CD8-positive, alpha-beta T cell (primary cell): ENCODE measurements at regions of chr11 and their contacts with region 1.

Region 1: GRCh38 chr11:70191495-70192140 is 11.5 kb upstream of the FADD start:
- DNase-seq: peak in 7 of 9 experiments; percentile 28 to 57 (median 52)
- ATAC-seq: peak; percentile 62
- H3K4me3 ChIP-seq: no peak overlapping the region
- H3K4me3 Mint-ChIP-seq: no peak overlapping the region
- H3K27ac ChIP-seq: no peak overlapping the region
- H3K27ac Mint-ChIP-seq: no peak overlapping the region
- H3K4me1 ChIP-seq: no peaks in the 10 kb centered on the region
- H3K4me1 Mint-ChIP-seq: peaks cover 2% of the 10 kb centered on the region
- H3K27me3 ChIP-seq: peaks cover 0 to 5% of the 10 kb centered on the region in 2 experiments
- H3K27me3 Mint-ChIP-seq: peaks cover 9% of the 10 kb centered on the region
- CTCF ChIP-seq: peak; percentile 16

Region 2: GRCh38 chr11:69101115-69101791 is 1090.4 kb before region 1 on chr11:
- CTCF ChIA-PET with region 1: no interaction called
- POLR2A ChIA-PET with region 1: no interaction called
- intact Hi-C with region 1: loop called in 1 of 2 experiments (anchors 5 kb)
- DNase-seq: peak; percentile 57 to 85 (median 70)
- ATAC-seq: peak; percentile 99
- H3K4me3 ChIP-seq: no peak overlapping the region
- H3K4me3 Mint-ChIP-seq: no peak overlapping the region
- H3K27ac ChIP-seq: no peak overlapping the region
- H3K27ac Mint-ChIP-seq: no peak overlapping the region
- H3K4me1 ChIP-seq: no peaks in the 10 kb centered on the region
- H3K4me1 Mint-ChIP-seq: peaks cover 4% of the 10 kb centered on the region
- H3K27me3 ChIP-seq: peaks cover 0 to 6% of the 10 kb centered on the region in 2 experiments
- H3K27me3 Mint-ChIP-seq: peaks cover 3% of the 10 kb centered on the region
- CTCF ChIP-seq: peak; percentile 95

Region 3: DNA sequence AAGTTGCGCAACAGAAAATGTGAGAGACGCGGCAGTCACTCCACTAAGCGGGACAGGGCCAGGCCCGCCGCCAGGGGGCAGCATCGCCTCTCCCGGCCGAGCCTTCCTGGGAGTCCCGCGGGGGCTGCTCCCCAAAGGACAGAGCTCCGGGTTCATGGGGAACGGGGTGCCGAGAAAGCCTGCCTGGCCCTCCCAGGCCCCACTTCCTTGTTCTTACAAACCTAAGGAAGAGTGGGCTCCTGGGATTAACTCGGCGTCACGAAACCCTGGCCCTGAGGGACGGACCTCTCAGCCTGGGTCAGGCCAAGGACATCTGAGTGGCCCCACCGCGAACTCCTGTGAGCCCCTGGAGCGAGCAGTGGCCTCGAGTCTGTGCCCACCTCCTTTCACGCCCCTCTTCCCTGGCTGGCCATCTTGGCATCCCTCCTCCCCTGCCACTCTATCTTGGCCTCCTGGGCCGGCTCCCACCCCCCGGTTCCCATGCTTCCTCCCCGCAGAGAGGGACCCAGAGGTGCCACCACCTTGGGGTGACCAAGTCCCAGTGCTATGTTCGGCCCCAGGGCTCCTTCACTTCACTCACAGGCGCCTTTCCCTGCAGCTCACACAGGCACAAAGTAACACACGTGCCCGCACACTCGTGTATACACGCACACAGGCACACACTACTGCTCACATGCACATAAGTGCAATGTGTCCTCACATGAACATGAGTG is 272.5 kb before region 1 on chr11:
- CTCF ChIA-PET with region 1: interaction called, 10 read pairs
- POLR2A ChIA-PET with region 1: no interaction called
- intact Hi-C with region 1: loop called (anchors 1 kb)
- DNase-seq: peak; percentile 15 to 78 (median 66)
- ATAC-seq: peak; percentile 52
- H3K4me3 ChIP-seq: no peak overlapping the region
- H3K4me3 Mint-ChIP-seq: no peak overlapping the region
- H3K27ac ChIP-seq: no peak overlapping the region
- H3K27ac Mint-ChIP-seq: no peak overlapping the region
- H3K4me1 ChIP-seq: peaks cover 3% of the 10 kb centered on the region
- H3K4me1 Mint-ChIP-seq: peaks cover 5% of the 10 kb centered on the region
- H3K27me3 ChIP-seq: peaks cover 0 to 9% of the 10 kb centered on the region in 2 experiments
- H3K27me3 Mint-ChIP-seq: peaks cover 35% of the 10 kb centered on the region
- CTCF ChIP-seq: peak; percentile 64

Region 4: GRCh38 chr11:70326365-70326811 is 134.8 kb after region 1 on chr11:
- CTCF ChIA-PET with region 1: no interaction called
- POLR2A ChIA-PET with region 1: no interaction called
- intact Hi-C with region 1: no loop called
- DNase-seq: no peak
- ATAC-seq: no peak
- H3K4me3 ChIP-seq: no peak overlapping the region
- H3K4me3 Mint-ChIP-seq: no peak overlapping the region
- H3K27ac ChIP-seq: no peak overlapping the region
- H3K27ac Mint-ChIP-seq: no peak overlapping the region
- H3K4me1 ChIP-seq: no peaks in the 10 kb centered on the region
- H3K4me1 Mint-ChIP-seq: no peaks in the 10 kb centered on the region
- H3K27me3 ChIP-seq: no peaks in the 10 kb centered on the region
- H3K27me3 Mint-ChIP-seq: no peaks in the 10 kb centered on the region
- CTCF ChIP-seq: no peak

Region 5: GRCh38 chr11:71383461-71383860 is 1191.8 kb after region 1 on chr11:
- CTCF ChIA-PET with region 1: no interaction called
- POLR2A ChIA-PET with region 1: no interaction called
- intact Hi-C with region 1: no loop called
- DNase-seq: no peak
- ATAC-seq: no peak
- H3K4me3 ChIP-seq: no peak overlapping the region
- H3K4me3 Mint-ChIP-seq: no peak overlapping the region
- H3K27ac ChIP-seq: no peak overlapping the region
- H3K27ac Mint-ChIP-seq: no peak overlapping the region
- H3K4me1 ChIP-seq: no peaks in the 10 kb centered on the region
- H3K4me1 Mint-ChIP-seq: peaks cover 2% of the 10 kb centered on the region
- H3K27me3 ChIP-seq: no peaks in the 10 kb centered on the region
- H3K27me3 Mint-ChIP-seq: peaks cover 30% of the 10 kb centered on the region
- CTCF ChIP-seq: no peak